ENCODE measurements at regions of chr6 and their contacts with region 1.

Region 1: GRCh38 chr6:13328076-13328874 is at the start of gene TBC1D7:
- DNase-seq: peak; percentile 94
- H3K4me3 Mint-ChIP-seq: peak within 1 kb of the TSS; percentile 95
- H3K27ac Mint-ChIP-seq: peak within 1 kb of the TSS; percentile 93
- H3K4me1 Mint-ChIP-seq: peaks cover 18% of the 10 kb centered on the region
- H3K27me3 Mint-ChIP-seq: no peaks in the 10 kb centered on the region
- total RNA-seq, gene TBC1D7: 25.4 to 27.1 TPM

Region 2: GRCh38 chr6:12890171-12890790 is 438.0 kb before region 1 on chr6:
- CTCF ChIA-PET with region 1: no interaction called
- intact Hi-C with region 1: loop called (anchors 5 kb)
- DNase-seq: peak; percentile 31
- H3K4me3 Mint-ChIP-seq: no peak overlapping the region
- H3K27ac Mint-ChIP-seq: no peak overlapping the region
- H3K4me1 Mint-ChIP-seq: no peaks in the 10 kb centered on the region
- H3K27me3 Mint-ChIP-seq: peaks cover 15% of the 10 kb centered on the region

Region 3: GRCh38 chr6:13012977-13013680 is 315.1 kb before region 1 on chr6:
- CTCF ChIA-PET with region 1: no interaction called
- intact Hi-C with region 1: loop called (anchors 5 kb)
- DNase-seq: peak; percentile 31
- H3K4me3 Mint-ChIP-seq: peak overlapping the region; percentile 66
- H3K27ac Mint-ChIP-seq: no peak overlapping the region
- H3K4me1 Mint-ChIP-seq: peaks cover 8% of the 10 kb centered on the region
- H3K27me3 Mint-ChIP-seq: peaks cover 53% of the 10 kb centered on the region

Region 4: DNA sequence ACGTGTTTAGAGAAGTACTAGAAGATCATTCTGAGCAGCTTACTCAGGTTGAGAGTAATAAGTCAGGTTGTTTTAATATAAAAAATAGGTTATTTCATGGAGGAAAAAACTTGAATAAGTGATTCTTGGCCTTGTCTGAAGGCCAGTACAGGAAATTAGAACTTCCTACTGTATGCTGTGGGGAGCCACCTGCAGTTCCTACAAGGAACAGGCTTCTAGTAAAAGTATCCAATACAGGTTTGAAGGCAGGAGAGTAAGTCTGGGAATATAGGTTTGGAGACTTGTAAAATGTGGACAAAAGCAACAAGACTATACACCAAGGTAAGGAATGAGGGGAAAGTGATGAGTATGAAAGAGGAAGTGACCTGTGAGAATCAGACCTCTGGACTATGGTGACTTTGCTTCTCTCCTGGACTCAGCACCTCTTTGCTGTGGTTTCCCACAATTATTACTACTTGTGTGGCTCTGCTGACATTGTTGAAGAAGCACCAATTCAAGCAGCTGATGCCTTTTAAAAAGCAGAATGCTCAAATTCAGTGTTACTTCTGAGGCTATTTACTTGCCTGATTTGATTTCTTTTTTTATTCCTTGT is 278.5 kb before region 1 on chr6:
- CTCF ChIA-PET with region 1: no interaction called
- intact Hi-C with region 1: no loop called
- DNase-seq: no peak
- H3K4me3 Mint-ChIP-seq: no peak overlapping the region
- H3K27ac Mint-ChIP-seq: no peak overlapping the region
- H3K4me1 Mint-ChIP-seq: no peaks in the 10 kb centered on the region
- H3K27me3 Mint-ChIP-seq: peaks cover 9% of the 10 kb centered on the region

Region 5: GRCh38 chr6:13234130-13234529 is 94.1 kb before region 1 on chr6:
- CTCF ChIA-PET with region 1: no interaction called
- intact Hi-C with region 1: no loop called
- DNase-seq: no peak
- H3K4me3 Mint-ChIP-seq: no peak overlapping the region
- H3K27ac Mint-ChIP-seq: no peak overlapping the region
- H3K4me1 Mint-ChIP-seq: peaks cover 10% of the 10 kb centered on the region
- H3K27me3 Mint-ChIP-seq: peaks cover 2% of the 10 kb centered on the region

Region 6: DNA sequence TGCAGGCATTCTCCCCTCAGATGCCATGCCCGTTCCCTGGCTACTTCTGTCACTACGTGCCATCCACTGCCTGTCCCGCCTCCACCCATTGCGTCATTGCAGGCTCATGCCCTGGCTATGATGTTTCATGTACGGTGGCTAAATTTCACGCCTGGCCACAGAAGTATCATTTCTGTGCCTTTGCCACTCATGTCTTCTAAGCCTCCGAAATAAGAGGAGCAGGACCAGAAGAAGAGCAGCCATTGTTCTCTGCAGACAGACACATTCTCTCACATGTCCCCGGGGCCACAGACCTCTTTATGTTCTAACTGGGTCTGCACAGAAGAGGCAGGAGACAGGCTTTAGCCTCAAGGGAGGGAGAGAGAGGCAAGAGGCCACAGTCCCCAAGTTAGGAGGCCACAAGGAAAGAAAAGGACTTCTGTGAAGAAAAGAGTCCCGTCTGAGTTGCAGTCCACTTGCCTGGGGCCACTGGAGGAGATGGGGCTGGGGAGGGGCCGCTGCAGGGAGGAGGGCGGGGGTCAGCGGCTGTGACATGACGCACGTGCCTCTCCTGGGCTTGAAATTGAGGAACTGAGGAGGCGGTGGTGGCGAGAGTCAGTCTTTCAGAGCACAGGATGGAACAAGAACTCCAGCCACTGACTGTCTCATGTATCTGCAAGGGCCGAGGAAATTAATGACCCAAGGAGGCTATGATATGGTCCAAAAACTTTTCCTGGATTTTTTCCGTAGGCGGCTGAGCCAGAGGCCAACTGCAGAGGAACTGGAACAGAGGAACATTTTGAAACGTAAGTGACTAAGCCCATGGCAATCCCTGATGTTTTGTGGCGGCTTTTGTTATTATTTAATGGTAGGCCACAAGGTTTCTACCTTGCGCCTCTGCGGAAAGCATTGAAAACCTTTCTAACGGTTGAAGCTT is 55.9 kb before region 1 on chr6:
- CTCF ChIA-PET with region 1: interaction called, 3 read pairs
- intact Hi-C with region 1: loop called (anchors 1 kb)
- DNase-seq: no peak
- H3K4me3 Mint-ChIP-seq: no peak overlapping the region
- H3K27ac Mint-ChIP-seq: no peak overlapping the region
- H3K4me1 Mint-ChIP-seq: peaks cover 15% of the 10 kb centered on the region
- H3K27me3 Mint-ChIP-seq: no peaks in the 10 kb centered on the region

Region 7: GRCh38 chr6:13292757-13293156 is 35.5 kb before region 1 on chr6:
- CTCF ChIA-PET with region 1: no interaction called
- intact Hi-C with region 1: no loop called
- DNase-seq: no peak
- H3K4me3 Mint-ChIP-seq: no peak overlapping the region
- H3K27ac Mint-ChIP-seq: no peak overlapping the region
- H3K4me1 Mint-ChIP-seq: no peaks in the 10 kb centered on the region
- H3K27me3 Mint-ChIP-seq: no peaks in the 10 kb centered on the region

Measured in activated naive CD4-positive, alpha-beta T cell treated with anti-CD3 and anti-CD28 coated beads for 36 hours (primary cell).